ENCODE measurements at regions of chr16 and their contacts with region 1.

Region 1: GRCh38 chr16:28990375-28991040 is 5.7 kb downstream of the LAT start:
- DNase-seq: peak; percentile 90
- H3K4me3 Mint-ChIP-seq: peak overlapping the region; percentile 11
- H3K27ac Mint-ChIP-seq: peak overlapping the region; percentile 99
- H3K4me1 Mint-ChIP-seq: peaks cover 65% of the 10 kb centered on the region
- H3K27me3 Mint-ChIP-seq: no peaks in the 10 kb centered on the region

Region 2: DNA sequence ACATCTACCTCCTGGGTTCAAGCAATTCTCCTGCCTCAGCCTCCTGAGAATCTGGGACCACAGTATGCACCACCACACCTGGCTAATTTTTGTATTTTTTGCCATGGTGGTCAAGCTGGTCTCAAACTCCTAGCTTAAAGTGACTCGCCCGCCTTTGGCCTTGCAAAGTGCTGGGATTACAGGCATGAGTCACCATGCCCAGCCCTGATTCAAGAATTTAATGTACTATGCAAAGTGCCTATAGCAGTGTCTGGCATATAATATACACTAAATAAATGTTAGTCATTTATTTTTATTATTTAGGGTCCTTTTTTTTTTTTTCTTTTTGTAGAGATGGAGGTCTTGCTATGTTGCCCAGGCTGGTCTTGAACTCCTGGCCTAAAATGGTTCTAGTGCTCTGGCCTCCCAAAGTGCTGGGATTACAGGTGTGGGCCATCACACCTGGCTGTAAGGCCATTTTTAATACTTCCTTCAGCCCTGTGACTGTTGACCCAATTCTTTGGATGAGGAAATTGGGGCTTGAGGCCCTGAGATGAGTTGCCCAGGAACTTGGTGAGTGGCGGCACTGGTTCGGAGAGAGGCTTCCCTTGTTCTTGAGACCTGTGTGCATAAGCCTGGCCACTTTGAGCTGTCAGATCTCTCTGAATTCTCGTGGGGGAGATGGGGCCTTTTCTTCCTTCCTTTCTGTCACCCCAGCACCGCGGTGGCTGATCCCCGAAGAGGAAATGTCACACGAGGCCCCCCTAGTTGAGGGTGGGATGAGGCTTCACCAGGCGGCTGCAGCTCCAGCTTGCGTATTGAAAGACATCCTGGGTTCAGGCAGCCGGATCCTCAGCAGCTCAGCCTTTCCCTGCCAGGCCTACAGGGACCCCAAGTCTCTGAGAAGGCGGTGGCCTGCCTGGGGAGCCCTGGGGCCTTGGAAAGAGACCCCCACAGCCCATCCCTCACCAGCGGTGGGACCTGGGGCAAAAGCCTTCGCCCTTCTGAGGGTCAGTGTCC is 33.1 kb after region 1 on chr16:
- CTCF ChIA-PET with region 1: interaction called, 6 read pairs
- intact Hi-C with region 1: loop called (anchors 1 kb)
- DNase-seq: no peak
- H3K4me3 Mint-ChIP-seq: no peak overlapping the region
- H3K27ac Mint-ChIP-seq: no peak overlapping the region
- H3K4me1 Mint-ChIP-seq: peaks cover 73% of the 10 kb centered on the region
- H3K27me3 Mint-ChIP-seq: no peaks in the 10 kb centered on the region